ENCODE measurements at regions of chr2 and their contacts with region 1.

Region 1: GRCh38 chr2:46569061-46569560 is 89.7 kb downstream of the TMEM247 start:
- DNase-seq: peak; percentile 82
- ATAC-seq: peak; percentile 91
- H3K4me3 ChIP-seq: peak overlapping the region; percentile 41; the same call in 1 of the 2 replicates
- H3K27ac ChIP-seq: peak overlapping the region; percentile 97
- H3K4me1 ChIP-seq: peaks cover 89% of the 10 kb centered on the region
- H3K27me3 ChIP-seq: no peaks in the 10 kb centered on the region
- CTCF ChIP-seq: no peak
- EP300 ChIP-seq: peak in 1 of 2 experiments; percentile 47; a peak in 1 of 4 replicates
- POLR2A ChIP-seq: peak; percentile 63
- RAD21 ChIP-seq: no peak

Region 2: GRCh38 chr2:46470114-46470628 is 98.9 kb before region 1 on chr2:
- CTCF ChIA-PET with region 1: interaction called, 9 read pairs
- POLR2A ChIA-PET with region 1: interaction called, 4 read pairs
- RAD21 ChIA-PET with region 1: interaction called, 6 read pairs
- SMC1A ChIA-PET with region 1: interaction called, 11 read pairs
- in situ Hi-C with region 1: no loop called
- intact Hi-C with region 1: no loop called
- DNase-seq: no peak
- ATAC-seq: peak; percentile 16; the same call in 2 of the 3 replicates
- H3K4me3 ChIP-seq: no peak overlapping the region
- H3K27ac ChIP-seq: no peak overlapping the region
- H3K4me1 ChIP-seq: no peaks in the 10 kb centered on the region
- H3K27me3 ChIP-seq: no peaks in the 10 kb centered on the region
- CTCF ChIP-seq: no peak
- EP300 ChIP-seq: no peak
- POLR2A ChIP-seq: no peak
- RAD21 ChIP-seq: no peak

Region 3: DNA sequence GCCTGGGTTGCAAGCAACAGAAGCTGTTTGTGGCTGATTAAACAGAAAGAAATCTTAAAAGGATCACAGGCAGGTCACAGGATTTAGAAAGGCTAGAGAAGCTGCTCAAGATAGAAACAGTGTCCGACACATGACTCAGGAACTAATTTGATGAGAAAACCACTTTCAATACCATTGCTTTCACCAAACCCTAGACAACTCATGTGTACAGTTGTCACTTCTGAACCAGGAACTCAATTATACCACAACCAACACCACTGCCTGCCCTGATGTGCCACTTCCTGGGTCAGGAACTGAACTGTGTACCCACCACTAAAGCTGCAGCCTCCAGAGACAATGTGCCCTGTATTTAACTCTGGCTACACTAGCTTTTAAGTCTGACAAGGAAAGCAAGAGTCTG is 33.8 kb before region 1 on chr2:
- CTCF ChIA-PET with region 1: interaction called, 7 read pairs
- POLR2A ChIA-PET with region 1: interaction called, 11 read pairs
- RAD21 ChIA-PET with region 1: interaction called, 17 read pairs
- SMC1A ChIA-PET with region 1: interaction called, 23 read pairs
- in situ Hi-C with region 1: no loop called
- intact Hi-C with region 1: no loop called
- DNase-seq: peak; percentile 96
- ATAC-seq: peak; percentile 92
- H3K4me3 ChIP-seq: peak overlapping the region; percentile 17
- H3K27ac ChIP-seq: peak overlapping the region; percentile 45
- H3K4me1 ChIP-seq: peaks cover 33% of the 10 kb centered on the region
- H3K27me3 ChIP-seq: no peaks in the 10 kb centered on the region
- CTCF ChIP-seq: no peak
- EP300 ChIP-seq: peak; percentile 58 to 88; a peak in 3 of 4 replicates
- POLR2A ChIP-seq: no peak
- RAD21 ChIP-seq: no peak

Region 4: DNA sequence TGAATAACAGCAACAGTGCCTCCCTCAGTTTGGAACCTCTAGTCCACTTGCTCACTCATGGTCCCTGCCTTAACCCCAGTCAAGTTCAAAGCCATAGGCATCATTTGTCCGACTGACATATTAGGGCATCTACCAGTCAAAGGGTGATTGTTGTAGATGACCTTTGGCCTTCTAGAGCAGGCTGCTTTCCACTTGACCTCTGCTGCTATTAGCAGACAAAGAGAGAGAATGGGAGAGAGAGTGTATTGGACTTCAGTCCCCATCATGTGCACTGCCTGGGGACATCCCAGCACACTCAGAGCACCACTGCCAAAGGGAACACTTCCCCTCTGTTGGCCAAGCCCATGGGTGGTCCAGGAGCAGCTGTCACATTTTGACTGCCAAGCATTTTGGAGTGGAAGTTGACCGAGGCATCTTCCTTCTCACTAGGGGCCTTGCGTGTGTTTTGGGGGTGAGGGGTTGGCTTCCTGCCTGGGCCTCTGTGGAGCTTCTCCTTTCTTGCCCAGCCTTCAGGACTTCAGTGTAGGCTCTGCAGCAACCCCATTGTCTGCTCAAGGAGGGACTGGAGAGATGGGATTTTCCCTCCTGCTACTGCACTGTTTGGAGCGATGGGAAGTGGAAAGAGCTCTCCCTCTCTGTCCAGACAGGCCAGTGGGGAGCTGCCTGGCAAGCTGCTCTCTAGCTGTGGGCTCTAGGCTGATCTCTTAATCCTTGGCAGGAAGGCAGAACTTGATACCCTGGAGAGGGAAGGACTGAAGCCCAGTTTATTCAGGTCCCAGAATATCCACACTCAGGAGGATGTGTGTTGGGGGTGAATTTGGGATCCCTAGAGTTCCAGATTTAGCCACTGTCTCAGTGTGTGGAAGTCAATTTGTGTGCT is 21.6 kb before region 1 on chr2:
- CTCF ChIA-PET with region 1: no interaction called
- POLR2A ChIA-PET with region 1: interaction called, 91 read pairs
- RAD21 ChIA-PET with region 1: interaction called, 127 read pairs
- SMC1A ChIA-PET with region 1: interaction called, 188 read pairs
- in situ Hi-C with region 1: no loop called
- intact Hi-C with region 1: no loop called
- DNase-seq: no peak
- ATAC-seq: peak; percentile 5
- H3K4me3 ChIP-seq: peak overlapping the region; percentile 36; the same call in 1 of the 2 replicates
- H3K27ac ChIP-seq: peak overlapping the region; percentile 71
- H3K4me1 ChIP-seq: peaks cover 55% of the 10 kb centered on the region
- H3K27me3 ChIP-seq: no peaks in the 10 kb centered on the region
- CTCF ChIP-seq: no peak
- EP300 ChIP-seq: no peak
- POLR2A ChIP-seq: no peak
- RAD21 ChIP-seq: no peak

Region 5: DNA sequence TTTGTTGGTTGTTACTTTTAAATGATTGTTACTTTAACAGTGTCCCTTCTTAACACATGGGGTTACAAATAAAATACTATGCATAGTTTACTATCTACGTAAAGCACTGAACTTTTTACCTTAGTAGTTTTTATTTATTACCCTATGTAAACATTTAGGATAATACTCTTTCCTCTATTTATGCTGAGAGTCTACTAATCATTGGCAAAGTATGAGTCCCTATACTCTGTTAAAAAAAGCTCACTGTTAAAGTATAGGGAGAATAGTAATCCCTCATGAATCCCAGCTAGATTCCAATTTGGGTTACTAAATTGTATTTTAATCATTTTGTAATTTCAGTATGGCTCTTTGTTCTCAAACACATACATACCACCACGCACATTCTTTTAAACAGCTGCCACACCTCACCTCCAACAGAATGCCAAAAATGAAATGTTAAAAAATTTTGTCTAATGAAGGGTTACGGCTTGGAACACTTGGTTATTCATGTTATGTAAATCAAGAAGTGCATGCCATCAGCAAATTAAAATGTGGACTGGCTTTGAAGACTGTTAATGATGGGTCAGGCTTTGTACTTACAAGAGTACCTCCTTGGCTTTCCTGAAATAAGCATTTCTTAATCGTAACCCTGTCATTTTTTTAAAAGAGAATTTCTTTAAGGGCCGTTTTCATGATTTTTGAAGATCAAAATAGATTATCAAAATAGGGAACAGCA is 15.2 kb after region 1 on chr2:
- CTCF ChIA-PET with region 1: interaction called, 5 read pairs
- POLR2A ChIA-PET with region 1: interaction called, 9 read pairs
- RAD21 ChIA-PET with region 1: interaction called, 8 read pairs
- SMC1A ChIA-PET with region 1: interaction called, 11 read pairs
- in situ Hi-C with region 1: no loop called
- intact Hi-C with region 1: no loop called
- DNase-seq: no peak
- ATAC-seq: no peak
- H3K4me3 ChIP-seq: no peak overlapping the region
- H3K27ac ChIP-seq: no peak overlapping the region
- H3K4me1 ChIP-seq: no peaks in the 10 kb centered on the region
- H3K27me3 ChIP-seq: no peaks in the 10 kb centered on the region
- CTCF ChIP-seq: no peak
- EP300 ChIP-seq: no peak
- POLR2A ChIP-seq: no peak
- RAD21 ChIP-seq: no peak

Region 6: GRCh38 chr2:46601328-46601963 is 32.3 kb after region 1 on chr2:
- CTCF ChIA-PET with region 1: interaction called, 12 read pairs
- POLR2A ChIA-PET with region 1: interaction called, 3 read pairs
- RAD21 ChIA-PET with region 1: interaction called, 12 read pairs
- SMC1A ChIA-PET with region 1: interaction called, 18 read pairs
- in situ Hi-C with region 1: no loop called
- intact Hi-C with region 1: no loop called
- DNase-seq: no peak
- ATAC-seq: 0 out of 3 replicates have a peak, but pooled peaks have one; percentile 21
- H3K4me3 ChIP-seq: no peak overlapping the region
- H3K27ac ChIP-seq: no peak overlapping the region
- H3K4me1 ChIP-seq: no peaks in the 10 kb centered on the region
- H3K27me3 ChIP-seq: no peaks in the 10 kb centered on the region
- CTCF ChIP-seq: peak; percentile 22 to 50 (median 31); a peak in 3 of 6 replicates
- EP300 ChIP-seq: no peak
- POLR2A ChIP-seq: no peak
- RAD21 ChIP-seq: 0 out of 2 replicates have a peak, but pooled peaks have one; percentile 38